Astrocyte of the spinal cord (primary cell): ENCODE measurements at regions of chr7 and their contacts with region 1.

Region 1: GRCh38 chr7:80918909-80919662 is at the start of gene SEMA3C:
- DNase-seq: peak; percentile 98
- H3K4me3 ChIP-seq: peak within 1 kb of the TSS; percentile 96
- CTCF ChIP-seq: no peak

Region 2: GRCh38 chr7:81447351-81447952 is 528.4 kb after region 1 on chr7:
- in situ Hi-C with region 1: loop called (anchors 25 kb)
- DNase-seq: peak; percentile 70
- H3K4me3 ChIP-seq: no peak overlapping the region
- CTCF ChIP-seq: peak; percentile 55